ENCODE measurements at regions of chr3 and their contacts with region 1.

Region 1: DNA sequence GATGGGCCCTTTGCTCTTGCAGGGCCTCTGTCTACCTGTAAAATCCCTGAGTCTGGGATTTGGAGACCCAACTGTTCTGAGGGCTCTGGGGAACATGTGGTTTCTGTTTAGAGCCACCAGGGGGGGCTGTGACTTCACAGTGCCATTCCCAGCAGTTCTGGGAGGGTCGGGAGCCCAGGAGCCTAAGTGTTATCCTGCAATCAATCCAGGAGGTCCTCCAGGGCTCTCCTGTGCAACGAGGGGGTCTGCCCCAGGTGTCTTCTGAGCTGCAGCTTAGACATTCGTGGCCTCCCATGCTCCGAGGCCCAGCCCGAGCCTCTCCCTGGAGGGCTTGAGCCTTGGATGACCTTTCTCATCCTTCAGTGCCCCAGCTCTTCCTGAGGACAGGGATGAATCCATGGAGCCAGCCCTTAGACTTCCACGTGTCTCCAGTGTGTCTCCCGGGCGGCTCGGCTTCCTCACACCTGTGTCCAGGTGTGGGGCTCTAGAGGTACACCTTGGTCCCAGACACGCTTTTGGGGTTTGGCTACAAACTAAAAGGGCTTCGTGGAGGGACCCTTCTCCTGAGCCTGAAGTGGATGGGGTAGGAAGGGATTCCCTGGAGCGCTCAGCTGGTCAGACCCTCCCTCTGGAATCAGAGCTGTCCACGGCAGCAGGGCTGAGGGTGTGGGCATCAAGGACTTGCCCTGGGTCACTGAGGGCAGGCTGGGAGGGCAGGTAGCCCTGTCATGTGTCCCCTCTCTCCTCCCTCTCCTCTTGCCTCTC is 20.3 kb upstream of the ABTB1 start:
- DNase-seq: peak; percentile 66
- ATAC-seq: peak; percentile 64
- H3K4me3 ChIP-seq: no peak overlapping the region
- H3K4me3 Mint-ChIP-seq: no peak overlapping the region
- H3K27ac ChIP-seq: no peak overlapping the region
- H3K27ac Mint-ChIP-seq: no peak overlapping the region
- H3K4me1 ChIP-seq: no peaks in the 10 kb centered on the region
- H3K4me1 Mint-ChIP-seq: no peaks in the 10 kb centered on the region
- H3K27me3 ChIP-seq: no peaks in the 10 kb centered on the region
- H3K27me3 Mint-ChIP-seq: no peaks in the 10 kb centered on the region
- CTCF ChIP-seq: peak; percentile 84

Region 2: DNA sequence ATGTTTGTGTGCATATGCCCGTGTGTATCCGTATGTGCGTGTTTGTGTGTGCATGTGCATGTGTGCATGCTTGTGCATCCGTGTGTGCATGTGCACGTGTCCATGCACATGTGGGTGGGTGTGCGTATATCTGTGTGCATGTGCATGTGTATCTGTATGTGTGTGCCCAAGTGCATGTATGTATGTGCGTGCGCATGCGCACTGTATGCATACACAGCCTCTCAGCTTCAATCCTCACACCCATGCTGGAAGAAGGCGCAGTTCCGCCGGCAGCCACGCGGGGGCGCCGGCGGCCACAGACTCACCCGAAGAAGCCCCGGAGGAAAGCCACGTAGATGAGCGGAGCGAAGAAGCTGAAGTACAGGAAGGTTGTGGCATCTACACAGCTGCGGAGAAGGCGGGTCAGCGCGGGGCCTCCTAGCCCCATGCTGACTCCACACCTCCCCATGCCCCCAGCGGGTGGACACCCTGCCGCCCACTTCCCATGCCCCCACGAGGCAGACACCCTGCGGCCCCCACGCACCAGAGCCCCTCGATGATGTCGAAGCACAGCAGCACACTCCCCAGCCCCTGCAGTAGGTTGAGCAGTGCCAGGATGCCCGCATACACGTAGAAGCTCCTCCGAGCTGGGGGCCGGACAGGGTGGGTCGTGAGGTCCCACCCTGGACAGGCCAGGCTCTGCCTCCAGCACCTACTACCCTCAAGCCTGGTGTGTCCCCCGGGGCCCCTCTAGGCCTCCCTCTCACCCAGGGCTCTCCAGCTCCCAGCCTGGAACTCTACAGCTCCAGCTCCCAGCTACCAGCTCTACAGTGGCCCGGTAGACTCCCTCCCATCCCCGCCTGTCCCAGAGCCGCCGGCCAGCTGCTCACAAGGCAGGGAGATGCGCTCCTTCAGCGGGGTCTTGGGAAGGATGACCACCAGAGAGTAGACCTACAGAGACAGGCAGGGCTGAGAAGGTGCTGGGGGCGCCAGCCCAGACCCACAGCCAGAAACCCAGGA is 77.2 kb before region 1 on chr3:
- CTCF ChIA-PET with region 1: interaction called, 11 read pairs
- POLR2A ChIA-PET with region 1: no interaction called
- intact Hi-C with region 1: no loop called
- DNase-seq: peak; percentile 92
- ATAC-seq: peak; percentile 97
- H3K4me3 ChIP-seq: no peak overlapping the region
- H3K4me3 Mint-ChIP-seq: peak overlapping the region; percentile 52
- H3K27ac ChIP-seq: no peak overlapping the region
- H3K27ac Mint-ChIP-seq: peak overlapping the region; percentile 62
- H3K4me1 ChIP-seq: peaks cover 4 to 10% of the 10 kb centered on the region in 2 donors
- H3K4me1 Mint-ChIP-seq: peaks cover 9% of the 10 kb centered on the region
- H3K27me3 ChIP-seq: no peaks in the 10 kb centered on the region
- H3K27me3 Mint-ChIP-seq: no peaks in the 10 kb centered on the region
- CTCF ChIP-seq: peak; percentile 92

Region 3: GRCh38 chr3:127672516-127673190 is 20.2 kb after region 1 on chr3 and contains the start of gene ABTB1:
- CTCF ChIA-PET with region 1: no interaction called
- POLR2A ChIA-PET with region 1: interaction called, 11 read pairs
- intact Hi-C with region 1: no loop called
- DNase-seq: peak; percentile 88
- ATAC-seq: peak; percentile 87
- H3K4me3 ChIP-seq: peak within 1 kb of the TSS; percentile 41 to 87 (median 79)
- H3K4me3 Mint-ChIP-seq: peak within 1 kb of the TSS; percentile 94
- H3K27ac ChIP-seq: peak within 1 kb of the TSS; percentile 83 to 96
- H3K27ac Mint-ChIP-seq: peak within 1 kb of the TSS; percentile 98
- H3K4me1 ChIP-seq: peaks cover 16 to 22% of the 10 kb centered on the region in 2 donors
- H3K4me1 Mint-ChIP-seq: peaks cover 29% of the 10 kb centered on the region
- H3K27me3 ChIP-seq: no peaks in the 10 kb centered on the region
- H3K27me3 Mint-ChIP-seq: no peaks in the 10 kb centered on the region
- CTCF ChIP-seq: no peak
- total RNA-seq, gene ABTB1: 132 and 141 TPM in 2 replicates

Region 4: DNA sequence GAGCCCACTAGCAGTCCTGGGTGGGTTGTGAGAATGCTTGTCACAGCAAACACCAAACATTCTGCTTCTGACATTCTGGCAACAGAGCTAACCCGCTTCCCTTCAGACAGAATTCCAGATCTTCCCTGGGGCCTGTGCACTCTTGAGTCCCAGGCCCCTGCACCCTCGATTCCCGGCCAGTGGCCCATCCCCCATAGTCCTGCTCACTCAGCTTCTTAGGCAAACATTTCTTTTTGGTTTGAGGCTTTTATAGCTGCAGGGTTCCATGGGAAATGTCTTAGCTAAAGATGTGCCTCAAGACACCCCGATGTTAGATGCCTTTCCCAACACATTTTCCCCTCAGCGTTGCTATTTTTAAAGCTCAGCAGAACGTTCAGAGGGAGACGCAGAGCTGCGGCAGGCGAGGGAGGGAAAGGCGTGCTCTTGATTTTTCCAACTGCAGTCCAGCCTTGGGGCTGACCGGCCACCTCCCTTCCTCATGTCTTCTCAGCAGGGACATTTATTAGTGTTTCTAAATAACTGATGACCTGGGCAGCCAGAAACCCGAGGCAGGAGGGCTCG is 55.5 kb after region 1 on chr3:
- CTCF ChIA-PET with region 1: no interaction called
- POLR2A ChIA-PET with region 1: no interaction called
- intact Hi-C with region 1: no loop called
- DNase-seq: no peak
- ATAC-seq: no peak
- H3K4me3 ChIP-seq: no peak overlapping the region
- H3K4me3 Mint-ChIP-seq: no peak overlapping the region
- H3K27ac ChIP-seq: no peak overlapping the region
- H3K27ac Mint-ChIP-seq: no peak overlapping the region
- H3K4me1 ChIP-seq: no peaks in the 10 kb centered on the region
- H3K4me1 Mint-ChIP-seq: no peaks in the 10 kb centered on the region
- H3K27me3 ChIP-seq: no peaks in the 10 kb centered on the region
- H3K27me3 Mint-ChIP-seq: no peaks in the 10 kb centered on the region
- CTCF ChIP-seq: no peak

Region 5: GRCh38 chr3:127831723-127832172 is 179.3 kb after region 1 on chr3:
- CTCF ChIA-PET with region 1: interaction called, 14 read pairs
- POLR2A ChIA-PET with region 1: no interaction called
- intact Hi-C with region 1: loop called (anchors 1 kb)
- DNase-seq: peak; percentile 50
- ATAC-seq: peak; percentile 40
- H3K4me3 ChIP-seq: no peak overlapping the region
- H3K4me3 Mint-ChIP-seq: no peak overlapping the region
- H3K27ac ChIP-seq: no peak overlapping the region
- H3K27ac Mint-ChIP-seq: no peak overlapping the region
- H3K4me1 ChIP-seq: peaks cover 13 to 28% of the 10 kb centered on the region in 2 donors
- H3K4me1 Mint-ChIP-seq: peaks cover 26% of the 10 kb centered on the region
- H3K27me3 ChIP-seq: no peaks in the 10 kb centered on the region
- H3K27me3 Mint-ChIP-seq: no peaks in the 10 kb centered on the region
- CTCF ChIP-seq: peak; percentile 54

Region 6: DNA sequence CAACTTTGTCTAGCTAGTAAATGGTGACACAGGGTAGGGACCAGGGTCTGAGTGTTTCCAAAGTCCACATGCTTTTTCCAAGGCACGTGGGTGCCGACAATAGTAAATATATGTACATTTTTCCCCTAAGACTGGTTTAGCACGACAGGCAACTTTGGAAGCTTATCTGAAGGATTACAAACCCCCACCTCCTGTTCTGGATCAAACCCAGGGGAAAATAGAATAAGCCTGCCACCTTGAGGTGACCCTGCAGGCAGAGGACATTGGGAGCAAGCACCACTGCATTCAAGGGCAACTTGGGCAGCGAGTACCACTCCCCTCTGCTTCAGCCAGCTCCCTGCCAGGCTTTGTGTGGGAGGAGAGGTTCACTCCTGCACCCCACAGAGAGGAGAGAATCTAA is 307.4 kb after region 1 on chr3:
- CTCF ChIA-PET with region 1: interaction called, 20 read pairs
- POLR2A ChIA-PET with region 1: no interaction called
- intact Hi-C with region 1: no loop called
- DNase-seq: peak; percentile 8
- ATAC-seq: no peak
- H3K4me3 ChIP-seq: no peak overlapping the region
- H3K4me3 Mint-ChIP-seq: no peak overlapping the region
- H3K27ac ChIP-seq: no peak overlapping the region
- H3K27ac Mint-ChIP-seq: no peak overlapping the region
- H3K4me1 ChIP-seq: no peaks in the 10 kb centered on the region
- H3K4me1 Mint-ChIP-seq: no peaks in the 10 kb centered on the region
- H3K27me3 ChIP-seq: no peaks in the 10 kb centered on the region
- H3K27me3 Mint-ChIP-seq: peaks cover 3% of the 10 kb centered on the region
- CTCF ChIP-seq: no peak

Region 7: DNA sequence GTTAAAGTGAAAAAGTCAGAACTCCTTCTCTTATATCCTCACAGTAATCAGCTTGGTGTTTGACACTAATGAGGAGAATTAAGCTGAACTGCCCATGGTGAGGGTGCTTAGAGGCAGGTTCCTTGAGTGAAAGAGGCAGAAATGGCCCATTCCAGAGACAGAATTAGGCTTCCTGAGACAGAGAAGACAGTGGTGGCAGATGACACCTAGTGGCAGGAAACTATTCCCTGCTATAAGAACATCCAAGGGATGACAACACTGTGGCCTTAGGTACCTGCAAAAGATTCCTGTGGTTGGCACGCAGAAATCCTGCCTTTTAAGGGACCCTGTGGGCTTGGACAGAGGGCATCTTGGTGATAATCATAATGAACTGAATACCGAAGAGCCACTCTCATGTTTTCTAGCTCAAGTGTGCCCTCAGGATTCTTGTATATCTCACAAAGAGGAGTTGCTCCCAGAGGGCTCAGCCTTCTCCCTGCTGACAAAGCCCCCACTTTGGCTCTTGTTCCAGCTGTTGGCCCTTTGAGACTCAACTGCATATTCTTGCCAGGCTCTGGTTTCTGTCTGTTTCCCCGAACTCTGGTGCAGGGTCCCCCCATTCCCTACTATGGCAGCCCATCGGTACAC is 318.7 kb after region 1 on chr3:
- CTCF ChIA-PET with region 1: interaction called, 22 read pairs
- POLR2A ChIA-PET with region 1: no interaction called
- intact Hi-C with region 1: no loop called
- DNase-seq: peak; percentile 61
- ATAC-seq: peak; percentile 43
- H3K4me3 ChIP-seq: no peak overlapping the region
- H3K4me3 Mint-ChIP-seq: no peak overlapping the region
- H3K27ac ChIP-seq: no peak overlapping the region
- H3K27ac Mint-ChIP-seq: no peak overlapping the region
- H3K4me1 ChIP-seq: no peaks in the 10 kb centered on the region
- H3K4me1 Mint-ChIP-seq: no peaks in the 10 kb centered on the region
- H3K27me3 ChIP-seq: peaks cover 0 to 2% (median under 1%) of the 10 kb centered on the region in 4 experiments
- H3K27me3 Mint-ChIP-seq: peaks cover 10% of the 10 kb centered on the region
- CTCF ChIP-seq: peak; percentile 65

Region 8: GRCh38 chr3:128133273-128134084 is 481.1 kb after region 1 on chr3:
- CTCF ChIA-PET with region 1: no interaction called
- POLR2A ChIA-PET with region 1: no interaction called
- intact Hi-C with region 1: loop called (anchors 2 kb)
- DNase-seq: peak; percentile 49
- ATAC-seq: peak; percentile 49
- H3K4me3 ChIP-seq: no peak overlapping the region
- H3K4me3 Mint-ChIP-seq: no peak overlapping the region
- H3K27ac ChIP-seq: no peak overlapping the region
- H3K27ac Mint-ChIP-seq: no peak overlapping the region
- H3K4me1 ChIP-seq: no peaks in the 10 kb centered on the region
- H3K4me1 Mint-ChIP-seq: no peaks in the 10 kb centered on the region
- H3K27me3 ChIP-seq: peaks cover 0 to 3% (median 0%) of the 10 kb centered on the region in 4 experiments
- H3K27me3 Mint-ChIP-seq: peaks cover 17% of the 10 kb centered on the region
- CTCF ChIP-seq: peak; percentile 55